ENCODE measurements at regions of chr7 and their contacts with region 1.

Region 1: GRCh38 chr7:954330-955238 is at the start of gene ADAP1:
- DNase-seq: peak; percentile 88
- H3K4me3 Mint-ChIP-seq: peak within 1 kb of the TSS; percentile 74
- H3K27ac Mint-ChIP-seq: peak within 1 kb of the TSS; percentile 69
- H3K4me1 Mint-ChIP-seq: peaks cover 5% of the 10 kb centered on the region
- H3K27me3 Mint-ChIP-seq: peaks cover 8% of the 10 kb centered on the region
- total RNA-seq, gene ADAP1: 65.9 and 70.2 TPM in 2 replicates

Region 2: DNA sequence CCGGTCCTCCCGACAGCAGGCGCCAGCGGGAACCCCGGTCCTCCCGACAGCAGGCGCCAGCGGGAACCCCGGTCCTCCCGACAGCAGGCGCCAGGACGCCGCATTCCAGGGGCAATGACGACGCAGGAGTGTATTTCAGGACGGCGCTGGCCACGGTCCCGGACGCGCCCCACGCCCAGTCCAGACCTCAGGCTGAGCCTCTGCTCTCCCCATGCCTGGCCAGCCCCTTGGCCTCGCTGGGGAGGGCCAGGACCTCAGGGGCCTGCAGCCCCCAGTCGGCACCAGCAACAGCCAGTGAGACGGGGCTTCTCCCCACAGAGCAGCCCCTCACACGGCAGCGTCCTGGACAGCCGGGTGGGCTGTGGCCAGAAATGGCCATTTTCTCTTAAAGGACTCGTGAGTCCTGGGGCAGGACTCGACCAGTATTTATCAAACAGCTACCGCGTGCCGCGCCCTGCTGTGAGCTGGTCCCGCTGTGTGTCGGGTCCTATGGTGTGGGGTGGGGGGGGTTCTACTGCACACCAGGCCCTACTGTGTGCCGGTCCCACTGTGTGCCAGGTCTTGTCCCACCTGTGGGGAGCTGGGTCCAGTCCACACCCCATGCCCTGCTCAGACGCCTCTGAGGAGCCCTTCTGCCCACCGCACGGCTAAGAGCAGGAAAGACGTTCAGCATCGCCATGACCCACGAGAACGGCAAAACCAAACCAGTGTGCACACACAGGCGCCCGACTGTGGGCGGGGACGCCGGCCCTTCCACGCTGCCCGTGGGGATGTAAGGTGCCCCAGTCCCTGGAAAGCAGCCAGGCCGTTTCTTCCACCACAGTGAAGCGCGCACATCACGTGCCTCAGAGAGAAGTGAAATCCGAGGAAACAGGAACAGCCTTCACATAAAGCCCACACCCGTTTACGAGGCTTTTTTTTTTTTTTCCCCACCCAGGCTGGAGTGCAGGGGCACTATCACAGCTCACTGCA is 44.9 kb before region 1 on chr7:
- intact Hi-C with region 1: loop called (anchors 1 kb)
- DNase-seq: no peak
- H3K4me3 Mint-ChIP-seq: no peak overlapping the region
- H3K27ac Mint-ChIP-seq: no peak overlapping the region
- H3K4me1 Mint-ChIP-seq: peaks cover 7% of the 10 kb centered on the region
- H3K27me3 Mint-ChIP-seq: peaks cover 2% of the 10 kb centered on the region

Region 3: GRCh38 chr7:974820-975681 is 20.5 kb after region 1 on chr7 and contains the start of gene COX19:
- intact Hi-C with region 1: loop called (anchors 2 kb)
- DNase-seq: peak; percentile 96
- H3K4me3 Mint-ChIP-seq: peak within 1 kb of the TSS; percentile 95
- H3K27ac Mint-ChIP-seq: peak within 1 kb of the TSS; percentile 93
- H3K4me1 Mint-ChIP-seq: peaks cover 13% of the 10 kb centered on the region
- H3K27me3 Mint-ChIP-seq: no peaks in the 10 kb centered on the region
- total RNA-seq, gene COX19: 15.3 and 22.4 TPM in 2 replicates

Region 4: DNA sequence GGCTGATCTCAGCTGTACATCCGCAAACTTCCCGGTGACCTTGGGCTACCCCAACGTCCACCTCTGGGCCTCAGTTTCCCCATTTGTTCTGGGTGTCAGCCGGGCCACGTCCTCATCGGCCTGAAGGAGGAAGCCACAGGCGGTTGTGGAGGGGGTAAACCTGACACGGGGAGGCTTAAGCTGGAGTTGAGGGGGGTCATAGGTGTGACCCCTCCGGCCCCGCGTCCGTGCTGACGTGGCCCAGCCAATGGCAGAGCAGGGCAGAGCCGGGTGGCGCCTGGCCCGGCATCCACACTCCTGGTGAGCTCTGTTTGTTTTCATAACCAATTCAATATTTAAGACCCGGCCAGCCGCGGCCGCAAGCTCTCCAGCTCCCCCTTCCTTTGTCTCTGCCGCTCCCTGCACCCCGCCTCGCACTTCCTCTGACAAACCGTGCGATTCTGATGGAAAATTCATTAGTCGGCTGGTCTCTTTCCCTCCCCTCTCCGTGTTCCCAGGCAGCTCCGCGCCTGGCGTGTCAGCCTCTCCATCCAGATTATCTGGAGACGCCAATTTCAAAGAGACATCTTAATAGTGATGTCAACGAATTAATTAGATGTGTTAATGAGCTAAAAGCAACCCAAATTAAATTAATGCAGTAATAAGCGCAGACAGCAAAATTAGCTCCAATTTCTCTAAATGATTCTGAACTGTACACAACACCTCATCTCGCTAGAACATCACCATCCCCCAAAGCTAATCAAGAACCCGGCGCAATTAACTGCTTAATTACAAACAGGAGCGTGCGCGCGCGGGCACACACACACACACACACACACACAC is 449.3 kb after region 1 on chr7:
- intact Hi-C with region 1: no loop called
- DNase-seq: no peak
- H3K4me3 Mint-ChIP-seq: no peak overlapping the region
- H3K27ac Mint-ChIP-seq: no peak overlapping the region
- H3K4me1 Mint-ChIP-seq: peaks cover 2% of the 10 kb centered on the region
- H3K27me3 Mint-ChIP-seq: peaks cover 32% of the 10 kb centered on the region